Esophagus squamous epithelium (tissue), 5 donors: ENCODE measurements at regions of chr6 and their contacts with region 1.

Region 1: DNA sequence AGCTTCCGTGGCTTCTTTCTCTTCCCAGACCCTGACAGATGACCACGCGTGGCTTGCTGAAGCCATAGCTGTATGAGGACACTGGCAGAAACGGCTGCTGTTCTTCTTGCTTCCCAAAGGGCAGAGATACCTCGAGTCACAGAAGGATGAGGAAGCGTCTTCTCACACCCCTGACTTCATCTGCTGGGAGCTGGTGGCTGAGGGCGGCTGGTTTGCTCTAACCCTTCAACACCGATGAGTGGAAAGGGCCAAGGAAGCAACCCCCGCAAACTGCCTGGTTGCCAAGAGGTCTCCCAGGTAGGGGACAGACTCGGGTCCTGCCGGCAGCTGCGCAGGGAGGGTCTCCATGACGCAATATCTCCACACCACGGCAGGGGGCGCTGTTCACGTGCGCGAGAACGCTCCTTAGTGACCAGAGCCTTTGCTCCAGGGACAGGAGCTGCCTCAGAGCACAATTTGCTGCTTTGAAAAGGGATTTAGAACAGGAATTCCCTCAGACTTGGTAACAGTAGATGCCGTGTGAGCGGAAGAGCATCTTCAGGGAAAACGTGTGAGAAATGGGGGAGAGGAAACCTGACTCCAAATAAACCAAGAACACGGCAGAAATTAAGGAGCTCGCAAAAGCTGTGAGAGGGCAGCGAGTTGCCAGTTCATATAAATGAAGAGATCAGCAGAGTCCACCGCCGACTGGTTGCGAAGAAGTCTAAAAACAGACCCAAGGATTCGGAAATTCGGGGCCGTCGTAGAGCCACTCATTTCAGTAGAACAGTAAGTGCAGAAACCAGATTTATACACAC is 80.2 kb downstream of the ERMARD start:
- DNase-seq: no peak
- H3K4me3 ChIP-seq: no peak overlapping the region
- H3K27ac ChIP-seq: no peak overlapping the region
- H3K4me1 ChIP-seq: peaks cover 0 to 17% (median 10%) of the 10 kb centered on the region in 3 donors
- H3K27me3 ChIP-seq: peaks cover 0 to 20% (median 0%) of the 10 kb centered on the region in 4 donors
- CTCF ChIP-seq: peak; percentile 85 to 95 (median 92)
- POLR2A ChIP-seq: no peak

Region 2: DNA sequence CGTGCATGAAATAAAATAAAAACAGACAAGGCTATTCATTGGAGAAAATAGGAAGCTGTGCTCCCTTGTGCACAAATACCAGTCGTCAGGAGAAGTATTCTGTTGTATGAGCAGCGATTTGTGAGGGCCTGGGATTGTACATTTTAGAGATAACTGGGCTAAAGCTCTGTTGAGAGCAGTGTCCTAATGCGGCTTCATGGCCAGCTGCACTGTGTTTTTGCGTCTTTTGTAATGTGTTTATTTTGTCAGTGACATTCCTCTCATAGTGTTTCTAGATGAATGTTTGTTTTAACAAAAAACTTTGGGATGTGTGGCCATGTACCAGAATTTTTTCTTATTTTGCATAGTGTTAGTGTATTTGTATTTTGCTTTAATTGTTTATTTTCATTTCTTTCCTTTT is 65.4 kb before region 1 on chr6:
- intact Hi-C with region 1: no loop called
- DNase-seq: no peak
- H3K4me3 ChIP-seq: no peak overlapping the region
- H3K27ac ChIP-seq: peak overlapping the region in 2 of 4 donors; percentile 16 to 57
- H3K4me1 ChIP-seq: peaks cover 0 to 5% (median 3%) of the 10 kb centered on the region in 3 donors
- H3K27me3 ChIP-seq: no peaks in the 10 kb centered on the region
- CTCF ChIP-seq: no peak
- POLR2A ChIP-seq: no peak

Region 3: DNA sequence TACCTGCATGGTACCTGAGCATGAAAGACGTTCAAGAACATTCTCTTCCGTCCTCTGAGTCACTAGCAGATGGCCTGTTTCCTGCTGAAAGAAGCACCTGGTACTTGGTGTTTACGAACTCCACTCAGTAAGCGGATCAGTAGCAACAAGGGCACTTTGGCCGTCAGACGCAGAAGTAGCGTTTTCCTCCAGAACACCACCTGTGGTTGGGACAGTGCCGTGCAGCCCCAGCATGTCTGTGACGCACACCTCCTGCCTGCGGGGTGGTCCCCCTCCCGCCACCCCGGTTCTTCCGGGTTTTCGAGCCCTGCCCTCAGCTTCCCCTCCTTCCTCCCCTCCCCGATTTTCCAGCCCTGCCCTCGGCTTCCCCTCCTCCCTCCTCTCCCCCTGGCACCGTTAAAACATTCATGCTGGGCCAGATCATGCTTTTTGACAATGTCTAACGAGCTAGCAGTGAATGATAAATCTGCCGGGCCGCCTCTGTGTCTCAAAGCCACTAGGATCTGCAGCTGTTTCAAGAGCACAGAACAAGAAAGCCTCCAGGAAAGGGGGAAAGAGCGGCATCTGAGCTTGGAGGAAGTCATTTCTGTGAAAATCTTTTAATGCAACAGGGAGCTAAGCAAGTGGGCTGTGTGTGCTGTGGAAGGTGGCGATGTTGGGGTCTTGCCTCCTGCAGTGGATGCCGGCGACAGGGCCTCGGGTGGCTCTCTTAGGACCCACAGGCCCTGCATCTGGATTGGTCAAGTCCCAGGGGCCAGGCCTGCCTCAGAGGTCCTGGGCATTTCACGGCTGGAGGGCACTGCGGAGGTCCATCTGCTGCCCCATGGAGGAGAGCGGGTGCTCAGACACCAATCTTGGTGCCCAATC is 127.7 kb after region 1 on chr6:
- intact Hi-C with region 1: loop called (anchors 10 kb)
- DNase-seq: no peak
- H3K4me3 ChIP-seq: peak overlapping the region in 1 of 4 donors; percentile 47
- H3K27ac ChIP-seq: peak overlapping the region in 2 of 4 donors; percentile 25 to 58
- H3K4me1 ChIP-seq: peaks cover 6 to 45% (median 24%) of the 10 kb centered on the region in 3 donors
- H3K27me3 ChIP-seq: peaks cover 0 to 34% (median 0%) of the 10 kb centered on the region in 4 donors
- CTCF ChIP-seq: peak in 2 of 6 experiments; percentile 32 to 33
- POLR2A ChIP-seq: no peak

Region 4: GRCh38 chr6:170529839-170530469 is 698.3 kb after region 1 on chr6:
- intact Hi-C with region 1: loop called (anchors 10 kb)
- DNase-seq: no peak
- H3K4me3 ChIP-seq: no peak overlapping the region
- H3K27ac ChIP-seq: no peak overlapping the region
- H3K4me1 ChIP-seq: no peaks in the 10 kb centered on the region
- H3K27me3 ChIP-seq: no peaks in the 10 kb centered on the region
- CTCF ChIP-seq: peak; percentile 74 to 86 (median 81)
- POLR2A ChIP-seq: no peak